Naive thymus-derived CD8-positive, alpha-beta T cell (primary cell): ENCODE measurements at regions of chr1 and their contacts with region 1.

Region 1: DNA sequence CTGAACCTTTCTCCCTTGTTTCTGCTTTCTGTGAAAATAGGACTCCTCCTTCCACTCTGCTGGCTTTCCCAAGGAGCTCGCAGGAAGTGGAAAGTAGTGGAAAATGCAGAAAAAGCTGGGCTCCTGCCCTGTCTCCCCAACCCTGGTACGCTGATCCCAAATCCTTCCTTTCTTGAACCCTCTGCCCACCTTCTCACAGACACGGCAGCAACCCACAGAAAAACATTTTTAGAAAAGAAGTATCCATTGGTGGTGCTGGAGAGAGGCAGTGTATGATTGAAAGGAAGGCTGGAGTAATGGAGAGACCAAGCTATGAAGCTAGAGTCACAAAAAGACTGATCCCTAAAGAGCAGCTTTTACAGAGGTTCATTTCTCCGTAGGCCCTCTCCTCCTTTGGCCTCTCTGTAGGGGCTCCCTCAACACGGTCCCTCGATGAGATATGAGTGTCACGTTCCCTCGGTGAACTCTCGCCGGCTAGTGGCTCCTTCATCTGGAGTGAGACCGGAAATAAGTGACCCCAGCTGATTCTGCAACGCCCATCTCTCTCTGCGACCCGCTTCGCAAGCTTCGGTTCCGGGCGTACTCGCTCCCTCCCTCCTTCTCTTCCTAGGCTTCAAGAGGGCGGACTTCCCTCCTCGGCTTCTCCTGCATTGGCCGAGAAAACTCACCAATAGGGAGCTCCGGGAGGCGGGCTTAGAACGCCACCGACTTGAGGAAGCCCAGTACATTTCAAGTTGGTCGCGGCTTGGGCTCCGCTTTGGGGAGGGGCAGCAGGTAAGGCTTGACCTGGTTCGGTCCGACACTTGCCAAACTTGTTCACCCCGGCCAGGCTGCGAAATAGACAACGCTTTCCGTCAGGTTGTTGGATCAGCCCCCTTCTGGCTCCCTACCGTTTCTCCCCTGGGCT is at the starts of genes ANKRD34A and POLR3GL:
- DNase-seq: peak; percentile 75 to 95 (median 89)
- ATAC-seq: peak; percentile 84 to 87
- H3K4me3 Mint-ChIP-seq: peak within 1 kb of the TSS; percentile 88 to 99 (median 92)
- H3K27ac Mint-ChIP-seq: peak within 1 kb of the TSS; percentile 86 to 99 (median 98)
- H3K4me1 Mint-ChIP-seq: peaks cover 39 to 68% (median 66%) of the 10 kb centered on the region in 4 donors
- H3K27me3 Mint-ChIP-seq: no peaks in the 10 kb centered on the region
- polyA plus RNA-seq, gene ANKRD34A: 0.12 to 0.38 (median 0.25) TPM
- polyA plus RNA-seq, gene POLR3GL: 98.4 to 101 (median 98.6) TPM

Region 2: DNA sequence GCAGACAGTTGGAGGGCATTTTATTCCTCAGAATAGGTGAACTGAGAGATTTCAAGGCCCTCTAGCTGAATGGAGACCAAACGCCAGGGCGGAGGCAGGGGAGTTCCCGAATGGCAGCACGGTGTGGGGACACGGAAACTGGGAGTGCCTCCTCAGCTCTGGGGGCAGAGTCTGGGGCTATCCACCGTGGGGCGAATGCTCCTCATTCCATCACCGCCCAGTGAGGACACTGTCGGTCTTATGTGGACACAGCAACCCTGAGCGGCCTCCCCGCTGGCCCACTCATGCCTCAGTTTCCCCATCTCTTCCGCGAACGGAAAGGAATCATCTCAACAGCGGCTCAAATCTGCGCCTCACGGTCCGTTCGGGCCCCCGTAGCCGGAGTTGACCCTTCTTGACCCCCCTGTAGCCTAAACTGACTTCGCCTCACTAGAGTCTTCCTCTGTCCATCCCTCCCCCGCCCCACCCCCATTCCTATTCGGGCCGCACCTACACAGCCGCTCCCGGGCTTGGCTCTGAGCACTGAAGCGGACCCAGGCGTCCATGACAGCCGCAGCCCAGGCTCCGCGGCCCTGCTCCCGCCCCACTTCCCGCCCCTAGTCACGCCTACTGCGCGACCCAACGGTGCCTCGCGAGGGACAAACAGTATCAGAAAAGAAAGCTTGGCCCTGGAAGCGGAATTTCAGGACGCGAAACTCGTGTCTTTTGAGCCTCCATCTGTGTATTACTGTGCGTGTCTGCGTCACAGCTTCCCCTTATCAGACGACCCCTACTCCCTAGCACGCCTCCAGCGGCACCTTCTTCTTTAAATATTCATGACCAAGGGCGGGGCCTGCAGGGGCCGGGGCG is 45.9 kb before region 1 on chr1 and contains the start of gene PEX11B:
- POLR2A ChIA-PET with region 1: interaction called, 117 read pairs
- DNase-seq: peak; percentile 86 to 96 (median 91)
- ATAC-seq: peak; percentile 91 to 92
- H3K4me3 Mint-ChIP-seq: peak within 1 kb of the TSS; percentile 87 to 94 (median 92)
- H3K27ac Mint-ChIP-seq: peak within 1 kb of the TSS; percentile 91 to 97 (median 96)
- H3K4me1 Mint-ChIP-seq: peaks cover 29 to 59% (median 52%) of the 10 kb centered on the region in 4 donors
- H3K27me3 Mint-ChIP-seq: no peaks in the 10 kb centered on the region
- polyA plus RNA-seq, gene PEX11B: 35.3 to 50.3 (median 44.0) TPM

Region 3: GRCh38 chr1:145978854-145979759 is 14.9 kb after region 1 on chr1:
- POLR2A ChIA-PET with region 1: interaction called, 462 read pairs
- DNase-seq: peak; percentile 42 to 91 (median 78)
- ATAC-seq: peak; percentile 74 to 79
- H3K4me3 Mint-ChIP-seq: no peak overlapping the region
- H3K27ac Mint-ChIP-seq: no peak overlapping the region
- H3K4me1 Mint-ChIP-seq: peaks cover 2 to 45% (median 39%) of the 10 kb centered on the region in 4 donors
- H3K27me3 Mint-ChIP-seq: no peaks in the 10 kb centered on the region

Region 4: DNA sequence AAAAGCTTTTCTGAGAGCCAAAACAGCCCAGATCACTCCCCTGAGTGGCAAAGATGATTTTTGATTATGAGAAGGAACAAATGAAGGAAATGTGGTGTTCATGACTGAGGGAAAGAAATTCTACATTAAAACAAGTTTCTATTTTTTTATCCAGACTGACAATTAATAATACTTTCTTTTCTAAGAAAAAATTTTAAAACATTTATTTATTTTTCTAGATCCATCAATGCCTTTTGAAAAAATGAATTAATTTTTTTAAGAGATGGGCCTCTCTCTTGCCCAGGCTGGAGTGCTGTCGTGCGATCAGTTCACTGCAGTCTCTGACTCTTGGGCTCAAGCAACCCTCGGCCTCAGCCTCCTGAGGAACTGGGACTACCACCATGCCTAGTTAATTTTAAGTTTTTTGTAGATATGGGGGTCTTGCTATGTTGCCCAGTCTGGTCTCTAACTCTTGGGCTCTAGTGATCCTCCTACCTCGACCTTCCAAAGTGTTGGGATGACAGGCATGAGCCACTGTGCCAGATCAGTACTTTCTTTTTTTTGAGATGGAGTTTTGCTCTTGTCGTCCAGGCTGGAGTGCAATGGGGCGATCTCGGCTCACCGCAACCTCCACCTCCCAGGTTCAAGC is 43.4 kb after region 1 on chr1:
- POLR2A ChIA-PET with region 1: interaction called, 462 read pairs
- DNase-seq: no peak
- ATAC-seq: no peak
- H3K4me3 Mint-ChIP-seq: peak overlapping the region in 9 of 10 donors; percentile 76 to 89 (median 82)
- H3K27ac Mint-ChIP-seq: peak overlapping the region; percentile 83 to 100 (median 94)
- H3K4me1 Mint-ChIP-seq: peaks cover 20 to 51% (median 47%) of the 10 kb centered on the region in 4 donors
- H3K27me3 Mint-ChIP-seq: no peaks in the 10 kb centered on the region